ENCODE measurements at regions of chr19 and their contacts with region 1.

Region 1: DNA sequence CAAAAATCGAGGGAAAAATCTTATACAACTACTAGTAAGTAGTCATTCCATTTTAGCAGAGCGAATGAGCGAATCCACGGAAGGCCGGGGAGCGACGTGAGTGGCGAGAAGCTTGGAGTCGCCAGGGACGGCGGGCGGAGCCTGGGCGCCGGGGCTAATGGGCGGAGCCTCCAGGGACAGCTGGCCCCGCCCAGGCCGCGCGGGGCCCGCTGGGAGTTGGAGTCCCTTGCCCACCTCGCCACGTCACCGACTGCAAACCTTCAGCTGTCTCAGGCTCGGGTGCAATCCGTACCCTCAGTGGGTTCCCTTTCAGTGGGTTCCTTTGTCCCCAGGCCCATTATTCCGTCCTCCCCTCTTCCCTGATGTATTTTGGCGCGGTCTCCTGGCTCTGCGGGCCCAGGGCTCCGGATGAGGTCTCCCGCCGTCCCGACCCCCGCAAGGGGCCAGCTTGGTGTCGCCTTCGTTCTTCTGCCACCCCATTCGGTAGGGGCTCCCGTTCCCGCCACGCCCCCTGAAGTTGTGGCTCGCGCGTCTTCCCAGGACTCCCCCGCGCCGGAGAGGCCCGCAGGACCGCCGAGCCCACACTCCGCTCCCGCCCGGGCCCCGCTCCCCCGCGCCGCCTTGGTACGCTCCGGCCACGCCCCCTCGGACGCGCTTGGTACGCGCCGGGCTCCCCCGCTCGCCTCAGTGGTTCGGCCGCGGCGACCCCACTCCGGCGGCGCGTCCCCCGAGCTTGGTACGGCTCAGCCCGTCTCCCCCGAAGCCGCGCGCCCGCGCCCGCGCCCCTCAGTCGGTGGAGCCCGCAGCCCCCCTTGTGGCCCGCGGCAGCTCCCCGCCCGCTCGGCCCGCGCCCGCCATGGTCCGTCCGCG is at the start of gene PTOV1:
- DNase-seq: peak; percentile 92
- ATAC-seq: peak; percentile 89
- H3K4me3 Mint-ChIP-seq: peak within 1 kb of the TSS; percentile 85
- H3K27ac Mint-ChIP-seq: peak within 1 kb of the TSS; percentile 96
- H3K4me1 Mint-ChIP-seq: peaks cover 42% of the 10 kb centered on the region
- H3K27me3 Mint-ChIP-seq: peaks cover 21% of the 10 kb centered on the region
- total RNA-seq, gene PTOV1: 78.2 to 79.4 TPM

Region 2: GRCh38 chr19:49718511-49718910 is 132.2 kb before region 1 on chr19:
- CTCF ChIA-PET with region 1: interaction called, 14 read pairs
- DNase-seq: no peak
- ATAC-seq: no peak
- H3K4me3 Mint-ChIP-seq: no peak overlapping the region
- H3K27ac Mint-ChIP-seq: peak overlapping the region; percentile 4
- H3K4me1 Mint-ChIP-seq: peaks cover 14% of the 10 kb centered on the region
- H3K27me3 Mint-ChIP-seq: no peaks in the 10 kb centered on the region

Region 3: DNA sequence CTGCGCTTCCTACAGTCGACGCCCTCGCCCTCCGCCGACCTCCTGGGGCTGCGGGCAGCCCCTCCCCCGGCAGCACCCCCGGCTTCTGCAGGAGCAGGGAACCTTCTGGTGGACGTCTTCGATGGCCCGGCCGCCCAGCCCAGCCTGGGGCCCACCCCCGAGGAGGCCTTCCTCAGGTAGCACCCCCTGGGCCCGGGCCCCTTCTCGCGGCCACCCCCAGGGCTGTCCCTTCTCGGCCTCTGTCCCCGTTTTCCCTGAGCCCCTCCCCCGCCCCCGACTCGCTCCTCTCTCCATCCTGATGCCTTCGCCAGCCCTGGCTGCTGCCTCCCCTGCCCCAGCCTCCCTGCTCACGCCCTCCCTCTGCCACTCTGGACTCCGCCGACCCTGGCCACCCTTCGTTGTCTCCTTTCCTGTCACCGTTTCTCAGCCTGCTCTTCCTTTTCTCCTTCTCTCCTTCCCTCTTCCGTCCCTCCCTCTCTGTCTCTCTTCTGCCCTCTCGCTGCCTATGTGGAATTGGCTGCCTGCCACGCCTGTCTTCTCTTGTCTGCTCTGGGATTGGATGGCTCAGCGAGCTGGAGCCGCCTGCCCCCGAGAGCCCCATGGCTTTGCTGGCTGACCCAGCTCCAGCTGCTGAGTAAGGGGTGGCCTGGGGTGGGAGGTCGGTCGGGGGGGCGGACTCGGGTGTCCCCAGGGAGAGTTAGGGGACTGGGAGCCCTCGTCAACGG is 48.6 kb before region 1 on chr19:
- CTCF ChIA-PET with region 1: no interaction called
- DNase-seq: no peak
- ATAC-seq: no peak
- H3K4me3 Mint-ChIP-seq: no peak overlapping the region
- H3K27ac Mint-ChIP-seq: no peak overlapping the region
- H3K4me1 Mint-ChIP-seq: peaks cover 7% of the 10 kb centered on the region
- H3K27me3 Mint-ChIP-seq: no peaks in the 10 kb centered on the region

Region 4: GRCh38 chr19:49817964-49818648 is 32.6 kb before region 1 on chr19 and contains the start of gene MED25:
- CTCF ChIA-PET with region 1: interaction called, 13 read pairs
- DNase-seq: peak; percentile 89
- ATAC-seq: peak; percentile 66
- H3K4me3 Mint-ChIP-seq: peak within 1 kb of the TSS; percentile 90
- H3K27ac Mint-ChIP-seq: peak within 1 kb of the TSS; percentile 99
- H3K4me1 Mint-ChIP-seq: peaks cover 31% of the 10 kb centered on the region
- H3K27me3 Mint-ChIP-seq: no peaks in the 10 kb centered on the region
- total RNA-seq, gene MED25: 57.5 to 70.5 TPM

Region 5: DNA sequence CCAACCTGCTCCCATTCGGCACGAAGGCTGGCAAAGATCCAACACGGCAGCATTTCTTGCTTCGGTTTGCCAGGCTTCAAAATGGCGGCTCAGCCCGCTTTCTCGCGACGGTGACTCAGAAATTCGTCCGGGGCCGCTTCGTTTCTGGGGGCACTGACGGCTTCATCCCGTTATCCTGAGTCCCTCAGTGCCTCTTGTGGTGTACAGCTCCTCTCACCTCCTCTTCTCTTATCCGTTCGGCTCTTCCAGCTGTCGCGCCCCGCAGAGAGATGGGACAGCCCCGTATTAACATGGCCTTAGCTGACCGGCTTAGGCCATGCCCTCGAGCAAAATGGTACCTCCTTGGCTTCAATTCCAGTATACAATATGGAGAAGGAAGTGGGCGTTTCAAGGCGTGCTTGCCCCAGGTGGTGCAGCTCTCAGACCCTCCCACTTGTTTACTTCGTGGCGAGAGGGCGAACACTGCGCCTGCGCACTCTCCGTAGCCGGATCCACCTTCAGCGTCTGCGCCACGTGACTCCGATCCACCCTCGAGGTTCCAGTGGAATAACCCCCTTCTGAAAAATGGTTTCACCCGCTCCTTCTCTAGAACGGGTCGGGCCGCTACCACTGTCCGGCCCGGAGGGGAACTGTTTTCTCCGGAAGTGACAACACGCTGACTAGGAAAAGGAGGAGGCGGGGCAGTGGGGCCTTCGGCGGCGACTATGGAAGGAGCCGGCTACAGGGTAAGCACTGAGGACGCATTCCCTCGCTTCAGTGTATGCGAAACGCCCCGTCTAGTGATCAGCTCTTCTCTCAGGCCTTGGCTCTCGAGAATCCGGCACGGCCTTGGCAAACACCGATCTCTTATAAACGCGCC is 26.5 kb after region 1 on chr19 and contains the starts of genes AKT1S1 and TBC1D17:
- CTCF ChIA-PET with region 1: no interaction called
- DNase-seq: peak; percentile 100
- ATAC-seq: peak; percentile 73
- H3K4me3 Mint-ChIP-seq: no peak within 1 kb of the TSS
- H3K27ac Mint-ChIP-seq: no peak within 1 kb of the TSS
- H3K4me1 Mint-ChIP-seq: peaks cover 33% of the 10 kb centered on the region
- H3K27me3 Mint-ChIP-seq: no peaks in the 10 kb centered on the region
- total RNA-seq, gene AKT1S1: 13.4 to 21.2 TPM
- total RNA-seq, gene TBC1D17: 26.2 to 39.3 TPM